Dendritic cell treated with granulocyte-macrophage colony-stimulating factor and Interleukin-4, amounts not matched to agents 40 ng/mL and 50 ng/mL, for 4 days (primary cell): ENCODE measurements at regions of chr7 and their contacts with region 1.

Region 1: DNA sequence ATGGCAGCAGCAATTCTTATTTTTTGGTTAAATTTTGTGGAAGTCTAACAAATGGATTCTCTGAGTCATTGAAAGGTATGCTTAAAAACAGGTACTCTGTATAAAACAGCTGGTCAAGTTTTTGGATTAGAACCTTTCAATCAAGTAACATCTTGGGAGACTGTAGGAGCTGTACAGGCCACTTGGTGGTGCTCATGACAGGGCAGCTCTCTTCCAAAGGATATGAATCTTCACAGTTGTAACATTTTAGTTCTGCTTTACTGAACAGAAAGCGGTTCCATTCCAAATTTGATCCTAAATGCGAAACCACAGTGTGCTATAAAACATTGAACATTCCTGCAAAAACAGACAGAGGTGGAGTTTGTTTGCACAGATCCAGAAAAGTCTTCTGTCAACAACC is 44.5 kb upstream of the AGR3 start:
- H3K4me3 Mint-ChIP-seq: no peak overlapping the region
- H3K27ac Mint-ChIP-seq: no peak overlapping the region
- H3K4me1 Mint-ChIP-seq: peaks cover 30% of the 10 kb centered on the region
- H3K27me3 Mint-ChIP-seq: peaks cover 3% of the 10 kb centered on the region

Region 2: DNA sequence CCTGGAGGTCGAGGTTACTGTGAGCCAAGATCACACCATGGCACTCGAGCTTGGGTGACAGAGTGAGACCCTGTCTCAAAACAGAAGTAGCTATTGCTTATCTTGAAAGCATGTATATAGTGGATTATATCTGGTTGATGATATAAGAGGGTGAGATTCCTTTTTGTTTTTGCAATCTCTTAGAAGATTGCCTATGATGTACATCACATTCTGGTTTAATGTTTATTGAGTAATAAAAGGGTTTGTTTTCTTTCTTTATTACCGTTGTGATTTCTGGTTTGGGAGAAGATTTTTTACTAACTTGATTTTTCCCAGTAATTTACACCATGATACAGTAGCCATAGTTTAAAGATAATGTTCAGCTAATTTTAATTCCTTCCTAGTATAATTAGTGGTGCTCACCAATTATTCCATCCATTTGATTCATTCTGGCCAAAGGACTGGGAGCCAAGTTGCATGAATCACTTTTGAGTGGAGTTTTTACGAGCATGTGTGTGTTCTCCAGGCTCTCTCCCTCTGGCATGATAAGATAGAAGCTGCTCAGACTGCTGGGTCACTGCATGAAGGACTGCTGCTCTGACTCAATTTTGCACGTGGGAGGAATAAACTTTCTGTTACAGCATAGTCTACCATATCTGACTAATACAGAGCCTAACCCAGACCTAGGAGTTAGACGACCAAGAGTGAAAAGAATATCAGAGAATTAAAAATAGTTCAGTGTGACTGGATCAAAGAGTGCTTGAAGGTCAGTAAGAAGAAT is 186.2 kb before region 1 on chr7:
- intact Hi-C with region 1: no loop called
- H3K4me3 Mint-ChIP-seq: no peak overlapping the region
- H3K27ac Mint-ChIP-seq: no peak overlapping the region
- H3K4me1 Mint-ChIP-seq: peaks cover 8% of the 10 kb centered on the region
- H3K27me3 Mint-ChIP-seq: no peaks in the 10 kb centered on the region

Region 3: DNA sequence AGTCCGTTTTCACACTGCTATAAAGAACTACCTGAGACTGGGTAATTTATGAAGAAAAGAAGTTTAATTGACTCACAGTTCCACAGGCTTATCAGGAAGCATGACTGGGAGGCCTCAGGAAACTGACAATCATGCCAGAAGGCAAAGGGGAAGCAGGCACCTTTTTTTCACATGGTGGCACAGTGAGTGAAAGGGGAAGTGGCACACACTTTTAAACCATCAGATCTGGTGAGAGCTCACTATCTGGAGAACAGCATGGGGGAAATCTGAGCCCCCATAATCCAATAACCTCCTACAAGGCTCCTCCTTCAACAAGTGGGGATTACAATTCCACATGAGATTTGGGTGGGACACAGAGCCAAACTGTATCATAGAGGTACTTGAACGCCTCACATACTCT is 74.5 kb before region 1 on chr7:
- intact Hi-C with region 1: no loop called
- H3K4me3 Mint-ChIP-seq: peak overlapping the region; percentile 9
- H3K27ac Mint-ChIP-seq: peak overlapping the region; percentile 84
- H3K4me1 Mint-ChIP-seq: peaks cover 30% of the 10 kb centered on the region
- H3K27me3 Mint-ChIP-seq: no peaks in the 10 kb centered on the region

Region 4: DNA sequence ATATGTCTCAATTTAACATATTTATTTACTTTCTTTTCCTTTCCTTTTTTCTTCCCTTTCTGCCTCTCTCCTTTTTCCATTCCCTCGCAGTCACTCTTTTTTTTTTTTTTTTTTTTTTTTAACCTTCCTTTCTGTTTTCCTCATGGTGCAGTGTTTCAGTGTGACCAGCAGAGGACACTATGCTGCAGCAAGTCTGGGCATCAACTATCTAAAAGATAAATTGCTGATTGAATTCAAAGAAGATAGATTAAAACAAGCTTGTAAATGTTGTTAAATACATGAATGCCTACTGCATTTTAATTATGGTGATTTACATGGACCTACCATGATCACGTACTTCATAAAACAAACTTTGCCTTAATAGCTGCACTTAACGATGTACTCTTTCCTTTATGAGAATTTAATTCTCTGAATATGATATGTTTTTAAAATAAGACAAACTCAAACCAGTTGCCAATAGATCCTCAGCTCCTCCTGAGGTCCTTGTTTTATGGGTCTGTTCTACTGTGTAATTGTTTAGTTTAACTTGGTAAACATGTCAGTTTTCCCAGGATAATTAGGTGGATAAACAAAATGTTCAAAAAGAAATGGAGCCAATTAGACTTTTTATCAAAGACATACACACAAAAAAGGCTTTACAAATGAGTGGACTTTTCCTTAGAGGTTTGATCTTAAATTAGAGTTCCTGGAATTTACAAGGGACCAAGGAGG is 56.5 kb after region 1 on chr7:
- intact Hi-C with region 1: loop called (anchors 5 kb)
- H3K4me3 Mint-ChIP-seq: peak overlapping the region; percentile 24
- H3K27ac Mint-ChIP-seq: peak overlapping the region; percentile 56
- H3K4me1 Mint-ChIP-seq: peaks cover 23% of the 10 kb centered on the region
- H3K27me3 Mint-ChIP-seq: peaks cover 3% of the 10 kb centered on the region